ENCODE measurements at regions of chr15 and their contacts with region 1.

Region 1: DNA sequence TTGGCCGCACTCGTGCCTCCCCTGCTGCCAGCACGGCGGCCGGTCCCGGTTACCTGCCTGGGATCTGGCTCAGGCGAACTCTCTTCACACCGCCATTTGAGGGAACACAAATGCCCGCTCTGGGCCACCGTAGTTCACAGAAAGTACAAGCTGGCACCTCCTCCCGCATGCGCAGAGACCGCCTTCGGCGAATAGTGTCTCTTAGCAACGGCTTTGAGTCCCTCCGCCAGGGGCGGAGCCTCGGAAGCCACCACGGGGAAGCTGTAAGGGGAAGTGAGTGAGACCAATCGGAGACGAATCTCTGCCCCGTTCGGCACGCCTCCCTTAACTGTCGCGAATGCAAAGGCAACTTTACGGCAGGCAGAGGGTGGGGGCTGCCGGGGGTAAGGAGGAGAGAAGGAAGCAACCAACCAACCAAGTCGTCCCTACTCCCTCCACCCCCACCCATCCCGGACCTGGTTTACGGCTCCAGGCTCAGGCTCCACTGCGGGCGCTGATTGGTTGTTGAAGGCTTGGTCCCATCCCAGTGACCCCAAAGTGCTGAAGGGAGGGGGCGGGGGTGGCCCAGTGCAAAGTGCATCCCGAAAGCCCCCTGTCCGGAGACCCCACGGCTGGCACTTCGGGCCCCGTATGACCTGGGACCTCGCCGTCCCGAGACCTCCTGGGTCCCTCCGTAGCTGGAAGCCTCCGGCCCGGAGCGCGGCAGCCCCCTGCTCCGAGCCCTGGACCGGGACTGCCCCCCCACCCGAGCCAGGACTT is at the starts of genes ASB7 and LINS1:
- DNase-seq: peak; percentile 99 to 100
- ATAC-seq: peak; percentile 89 to 98 (median 90)
- H3K4me3 ChIP-seq: peak within 1 kb of the TSS; percentile 89
- H3K4me3 Mint-ChIP-seq: no peak within 1 kb of the TSS
- H3K27ac ChIP-seq: peak within 1 kb of the TSS; percentile 83
- H3K27ac Mint-ChIP-seq: no peak within 1 kb of the TSS
- H3K4me1 ChIP-seq: peaks cover 21% of the 10 kb centered on the region
- H3K4me1 Mint-ChIP-seq: peaks cover 36 to 39% of the 10 kb centered on the region in 2 donors
- H3K27me3 ChIP-seq: no peaks in the 10 kb centered on the region
- H3K27me3 Mint-ChIP-seq: no peaks in the 10 kb centered on the region
- CTCF ChIP-seq: no peak
- total RNA-seq, gene ASB7: 16.1 to 23.1 (median 20.5) TPM
- total RNA-seq, gene LINS1: 26.1 to 28.2 (median 26.7) TPM

Region 2: GRCh38 chr15:99738021-99738847 is 864.0 kb before region 1 on chr15:
- intact Hi-C with region 1: loop called (anchors 5 kb)
- DNase-seq: no peak
- ATAC-seq: no peak
- H3K4me3 ChIP-seq: no peak overlapping the region
- H3K4me3 Mint-ChIP-seq: no peak overlapping the region
- H3K27ac ChIP-seq: no peak overlapping the region
- H3K27ac Mint-ChIP-seq: no peak overlapping the region
- H3K4me1 ChIP-seq: peaks cover 5% of the 10 kb centered on the region
- H3K4me1 Mint-ChIP-seq: peaks cover 4 to 5% of the 10 kb centered on the region in 2 donors
- H3K27me3 ChIP-seq: no peaks in the 10 kb centered on the region
- H3K27me3 Mint-ChIP-seq: no peaks in the 10 kb centered on the region
- CTCF ChIP-seq: no peak

Region 3: GRCh38 chr15:99928429-99928981 is 673.7 kb before region 1 on chr15:
- intact Hi-C with region 1: loop called (anchors 10 kb)
- DNase-seq: peak; percentile 89 to 94
- ATAC-seq: peak; percentile 95 to 99 (median 95)
- H3K4me3 ChIP-seq: peak overlapping the region; percentile 54
- H3K4me3 Mint-ChIP-seq: peak overlapping the region; percentile 76
- H3K27ac ChIP-seq: peak overlapping the region; percentile 77
- H3K27ac Mint-ChIP-seq: peak overlapping the region in 1 of 2 donors; percentile 81
- H3K4me1 ChIP-seq: peaks cover 15% of the 10 kb centered on the region
- H3K4me1 Mint-ChIP-seq: peaks cover 7 to 14% of the 10 kb centered on the region in 2 donors
- H3K27me3 ChIP-seq: peaks cover 4% of the 10 kb centered on the region
- H3K27me3 Mint-ChIP-seq: peaks cover 6 to 16% of the 10 kb centered on the region in 2 donors
- CTCF ChIP-seq: peak; percentile 69

Region 4: GRCh38 chr15:100341662-100342560 is 260.3 kb before region 1 on chr15 and contains the start of gene ADAMTS17:
- intact Hi-C with region 1: loop called (anchors 1 kb)
- DNase-seq: peak; percentile 91 to 98
- ATAC-seq: peak; percentile 95 to 99 (median 95)
- H3K4me3 ChIP-seq: peak within 1 kb of the TSS; percentile 35
- H3K4me3 Mint-ChIP-seq: peak within 1 kb of the TSS; percentile 67
- H3K27ac ChIP-seq: no peak within 1 kb of the TSS
- H3K27ac Mint-ChIP-seq: peak within 1 kb of the TSS in 1 of 2 donors; percentile 58
- H3K4me1 ChIP-seq: peaks cover 21% of the 10 kb centered on the region
- H3K4me1 Mint-ChIP-seq: peaks cover 11 to 13% of the 10 kb centered on the region in 2 donors
- H3K27me3 ChIP-seq: peaks cover 8% of the 10 kb centered on the region
- H3K27me3 Mint-ChIP-seq: peaks cover 22 to 35% of the 10 kb centered on the region in 2 donors
- CTCF ChIP-seq: peak; percentile 93
- total RNA-seq, gene ADAMTS17: 4.8 to 9.5 (median 5.3) TPM

Region 5: GRCh38 chr15:101242160-101242998 is 640.1 kb after region 1 on chr15:
- intact Hi-C with region 1: loop called (anchors 5 kb)
- DNase-seq: peak; percentile 62 to 90
- ATAC-seq: peak; percentile 92 to 95 (median 94)
- H3K4me3 ChIP-seq: peak overlapping the region; percentile 10
- H3K4me3 Mint-ChIP-seq: peak overlapping the region; percentile 93
- H3K27ac ChIP-seq: peak overlapping the region; percentile 62
- H3K27ac Mint-ChIP-seq: peak overlapping the region; percentile 85 to 95
- H3K4me1 ChIP-seq: peaks cover 56% of the 10 kb centered on the region
- H3K4me1 Mint-ChIP-seq: peaks cover 81 to 85% of the 10 kb centered on the region in 2 donors
- H3K27me3 ChIP-seq: no peaks in the 10 kb centered on the region
- H3K27me3 Mint-ChIP-seq: no peaks in the 10 kb centered on the region
- CTCF ChIP-seq: no peak

Region 6: GRCh38 chr15:101723874-101724674 is 1121.8 kb after region 1 on chr15 and contains the start of gene TARS3:
- intact Hi-C with region 1: loop called (anchors 5 kb)
- DNase-seq: peak; percentile 85 to 96
- ATAC-seq: peak; percentile 89 to 99 (median 91)
- H3K4me3 ChIP-seq: peak within 1 kb of the TSS; percentile 42
- H3K4me3 Mint-ChIP-seq: peak within 1 kb of the TSS; percentile 82
- H3K27ac ChIP-seq: peak within 1 kb of the TSS; percentile 68
- H3K27ac Mint-ChIP-seq: peak within 1 kb of the TSS; percentile 77 to 81
- H3K4me1 ChIP-seq: peaks cover 16% of the 10 kb centered on the region
- H3K4me1 Mint-ChIP-seq: peaks cover 19 to 27% of the 10 kb centered on the region in 2 donors
- H3K27me3 ChIP-seq: no peaks in the 10 kb centered on the region
- H3K27me3 Mint-ChIP-seq: no peaks in the 10 kb centered on the region
- CTCF ChIP-seq: no peak
- total RNA-seq, gene TARS3: 11.6 to 20.5 (median 12.1) TPM

Measured in natural killer cell (primary cell).